PC-9 (cell line): ENCODE measurements at regions of chr5 and their contacts with region 1.

Region 1: DNA sequence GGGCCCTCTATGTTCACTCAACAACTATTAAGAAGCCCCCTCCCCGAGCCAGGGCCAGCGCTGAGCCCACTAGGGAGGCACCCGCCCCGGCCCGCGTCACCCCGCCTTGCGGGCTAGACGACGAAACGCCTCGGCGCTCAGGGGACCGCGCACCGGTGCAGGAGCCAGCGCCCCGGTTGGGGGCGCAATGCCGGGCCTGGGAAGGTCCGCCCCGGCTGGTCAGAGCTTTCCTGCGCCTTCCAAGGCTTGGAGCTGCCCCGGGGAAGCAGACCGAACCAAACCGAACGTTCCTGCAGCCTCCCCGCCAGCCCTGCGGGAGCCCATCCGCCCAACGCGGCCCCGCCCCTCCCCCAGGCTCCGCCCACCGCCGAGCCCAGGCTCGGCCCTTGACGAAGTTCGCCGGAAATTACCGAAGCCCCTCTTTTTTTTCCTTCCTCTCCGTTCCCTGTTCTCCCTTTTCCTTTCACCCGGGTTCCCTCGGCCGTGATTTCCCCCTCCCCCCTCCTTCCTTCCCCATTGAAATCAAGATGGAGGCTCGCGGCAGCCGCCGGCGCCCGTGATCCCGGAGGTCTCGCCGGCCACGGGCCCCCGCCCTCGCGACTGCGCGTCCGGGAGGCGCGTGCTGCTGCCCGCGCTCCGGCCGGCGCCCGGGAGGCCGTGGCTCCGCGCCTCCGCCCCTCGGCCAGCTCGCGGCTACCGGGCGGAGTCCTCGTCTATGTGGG is at the start of gene TRIO:
- DNase-seq: peak; percentile 80 to 100
- H3K4me3 ChIP-seq: peak within 1 kb of the TSS; percentile 99
- H3K27ac ChIP-seq: peak within 1 kb of the TSS; percentile 78
- H3K4me1 ChIP-seq: peaks cover 40% of the 10 kb centered on the region
- H3K27me3 ChIP-seq: no peaks in the 10 kb centered on the region
- CTCF ChIP-seq: peak; percentile 68
- total RNA-seq, gene TRIO: 596 and 756 TPM in 2 replicates

Region 2: GRCh38 chr5:13843175-13843846 is 299.7 kb before region 1 on chr5:
- CTCF ChIA-PET with region 1: no interaction called
- POLR2A ChIA-PET with region 1: no interaction called
- intact Hi-C with region 1: no loop called
- DNase-seq: no peak
- H3K4me3 ChIP-seq: no peak overlapping the region
- H3K27ac ChIP-seq: no peak overlapping the region
- H3K4me1 ChIP-seq: no peaks in the 10 kb centered on the region
- H3K27me3 ChIP-seq: no peaks in the 10 kb centered on the region
- CTCF ChIP-seq: no peak

Region 3: GRCh38 chr5:13930541-13931172 is 212.3 kb before region 1 on chr5:
- CTCF ChIA-PET with region 1: no interaction called
- POLR2A ChIA-PET with region 1: no interaction called
- intact Hi-C with region 1: no loop called
- DNase-seq: no peak
- H3K4me3 ChIP-seq: no peak overlapping the region
- H3K27ac ChIP-seq: no peak overlapping the region
- H3K4me1 ChIP-seq: no peaks in the 10 kb centered on the region
- H3K27me3 ChIP-seq: no peaks in the 10 kb centered on the region
- CTCF ChIP-seq: no peak

Region 4: DNA sequence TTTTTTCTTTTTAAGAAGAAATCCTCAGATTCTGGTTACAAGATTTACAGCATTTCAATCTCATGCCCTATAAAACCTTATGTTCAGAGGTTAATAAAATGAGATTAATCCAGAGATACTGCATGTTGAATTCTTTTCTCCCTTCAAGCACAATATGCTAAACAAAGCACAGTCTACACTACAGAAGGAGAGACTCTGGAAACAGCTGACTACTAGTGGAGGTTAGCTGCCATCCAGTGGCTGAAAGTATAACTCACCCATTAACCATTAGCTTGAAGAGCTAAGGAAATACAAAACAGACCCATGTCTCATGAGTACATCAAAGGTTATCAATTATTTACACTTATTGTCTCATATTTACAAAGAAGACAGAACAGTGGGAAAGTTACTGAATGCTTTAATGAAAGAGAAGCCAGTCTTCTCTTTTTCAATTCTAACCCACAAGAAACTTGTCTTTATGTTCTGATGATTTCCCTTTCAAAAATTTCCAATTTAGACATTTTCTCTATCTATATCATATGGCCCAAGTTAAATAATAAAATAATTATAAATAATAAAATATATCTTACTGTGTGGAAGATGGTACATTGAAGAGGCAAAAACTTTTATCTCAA is 185.8 kb before region 1 on chr5:
- CTCF ChIA-PET with region 1: no interaction called
- POLR2A ChIA-PET with region 1: no interaction called
- intact Hi-C with region 1: no loop called
- DNase-seq: peak in 1 of 2 experiments; percentile 51
- H3K4me3 ChIP-seq: no peak overlapping the region
- H3K27ac ChIP-seq: no peak overlapping the region
- H3K4me1 ChIP-seq: peaks cover 11% of the 10 kb centered on the region
- H3K27me3 ChIP-seq: no peaks in the 10 kb centered on the region
- CTCF ChIP-seq: peak; percentile 89

Region 5: DNA sequence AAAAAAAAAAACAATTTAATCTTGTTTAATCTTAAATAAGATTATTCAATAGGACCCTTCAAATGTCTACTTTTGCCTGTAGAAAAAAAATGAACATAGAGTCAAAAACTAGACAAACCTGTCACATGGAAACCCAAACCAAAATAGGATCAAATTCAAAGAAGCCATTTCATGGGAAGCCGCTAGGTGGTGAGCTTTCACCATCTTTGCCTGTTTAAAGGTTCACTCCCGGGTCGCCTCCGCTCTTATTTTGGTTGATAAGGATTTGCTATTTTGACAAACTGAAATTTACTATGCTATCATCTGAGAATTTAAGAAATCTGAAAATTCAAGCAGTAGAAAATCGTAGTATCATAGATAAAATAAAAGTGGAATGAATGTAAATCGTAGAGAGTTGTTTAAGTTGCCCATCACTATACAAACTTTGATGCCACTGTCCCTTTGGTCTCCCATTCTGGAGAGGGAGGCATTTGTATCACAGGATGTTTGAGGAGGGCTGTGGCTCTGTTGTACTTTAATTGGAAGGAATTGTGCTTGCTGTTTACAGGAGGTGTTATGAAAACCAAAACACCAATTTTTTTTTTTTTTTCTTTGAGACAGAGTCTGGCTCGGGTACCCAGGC is 155.0 kb before region 1 on chr5:
- CTCF ChIA-PET with region 1: interaction called, 10 read pairs
- POLR2A ChIA-PET with region 1: interaction called, 5 read pairs
- intact Hi-C with region 1: loop called (anchors 1 kb)
- DNase-seq: peak; percentile 69 to 87
- H3K4me3 ChIP-seq: no peak overlapping the region
- H3K27ac ChIP-seq: peak overlapping the region; percentile 25; the same call in 1 of the 2 replicates
- H3K4me1 ChIP-seq: peaks cover 30% of the 10 kb centered on the region
- H3K27me3 ChIP-seq: no peaks in the 10 kb centered on the region
- CTCF ChIP-seq: peak; percentile 97

Region 6: DNA sequence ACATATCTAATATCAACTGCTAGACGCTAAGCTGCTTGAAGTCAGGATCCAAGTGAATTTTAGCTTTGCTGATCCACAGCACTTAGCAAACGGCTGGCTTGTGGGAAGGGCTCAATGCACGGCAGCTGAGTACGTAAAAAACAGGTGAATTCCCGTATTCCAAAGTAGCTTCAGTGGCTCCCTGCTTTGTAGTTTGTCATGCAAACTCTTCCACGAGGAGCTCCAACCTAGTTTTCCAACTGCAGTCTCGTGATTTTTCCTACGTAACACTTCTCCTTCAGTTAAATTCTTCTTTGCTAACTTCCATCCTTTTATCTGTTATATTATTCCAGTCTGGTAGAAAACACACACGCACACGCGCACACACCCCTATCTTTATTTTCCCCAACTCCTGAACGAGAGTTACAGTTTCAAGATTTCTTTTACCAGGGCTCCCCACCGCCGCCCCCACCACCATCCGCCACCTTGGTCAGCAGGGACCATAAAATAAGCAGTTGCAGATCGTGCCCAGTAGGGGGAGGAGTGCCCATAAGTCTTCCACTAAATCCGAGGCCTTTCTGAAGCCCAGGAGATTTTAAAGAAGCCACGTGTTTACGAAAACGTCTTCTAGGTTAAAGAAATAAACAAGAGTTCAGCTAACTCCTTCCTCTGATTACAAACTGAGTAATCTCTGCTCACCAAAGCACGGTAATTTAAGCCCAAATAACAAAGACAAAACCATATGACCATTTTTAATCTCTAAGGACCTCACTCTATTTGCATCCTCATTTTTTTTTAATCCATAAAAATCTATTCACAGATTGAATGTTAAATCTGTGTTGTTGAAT is 34.6 kb before region 1 on chr5:
- CTCF ChIA-PET with region 1: interaction called, 8 read pairs
- POLR2A ChIA-PET with region 1: interaction called, 23 read pairs
- intact Hi-C with region 1: loop called (anchors 1 kb)
- DNase-seq: peak in 1 of 2 experiments; percentile 81
- H3K4me3 ChIP-seq: no peak overlapping the region
- H3K27ac ChIP-seq: peak overlapping the region; percentile 22; the same call in 1 of the 2 replicates
- H3K4me1 ChIP-seq: peaks cover 10% of the 10 kb centered on the region
- H3K27me3 ChIP-seq: no peaks in the 10 kb centered on the region
- CTCF ChIP-seq: peak; percentile 59

Region 7: GRCh38 chr5:14172149-14172795 is 29.3 kb after region 1 on chr5:
- CTCF ChIA-PET with region 1: interaction called, 10 read pairs
- POLR2A ChIA-PET with region 1: interaction called, 9 read pairs
- intact Hi-C with region 1: no loop called
- DNase-seq: no peak
- H3K4me3 ChIP-seq: no peak overlapping the region
- H3K27ac ChIP-seq: peak overlapping the region; percentile 21; the same call in 1 of the 2 replicates
- H3K4me1 ChIP-seq: peaks cover 47% of the 10 kb centered on the region
- H3K27me3 ChIP-seq: no peaks in the 10 kb centered on the region
- CTCF ChIP-seq: no peak

Region 8: GRCh38 chr5:14234219-14234618 is 91.2 kb after region 1 on chr5:
- CTCF ChIA-PET with region 1: no interaction called
- POLR2A ChIA-PET with region 1: interaction called, 3 read pairs
- intact Hi-C with region 1: loop called (anchors 1 kb)
- DNase-seq: peak; percentile 93
- H3K4me3 ChIP-seq: no peak overlapping the region
- H3K27ac ChIP-seq: peak overlapping the region; percentile 73
- H3K4me1 ChIP-seq: peaks cover 40% of the 10 kb centered on the region
- H3K27me3 ChIP-seq: no peaks in the 10 kb centered on the region
- CTCF ChIP-seq: no peak

Region 9: GRCh38 chr5:14270209-14270702 is 127.3 kb after region 1 on chr5:
- CTCF ChIA-PET with region 1: interaction called, 23 read pairs
- POLR2A ChIA-PET with region 1: interaction called, 20 read pairs
- intact Hi-C with region 1: loop called (anchors 1 kb)
- DNase-seq: peak; percentile 81 to 86
- H3K4me3 ChIP-seq: 0 out of 2 replicates have a peak overlapping the region, but pooled peaks have one; percentile 8
- H3K27ac ChIP-seq: peak overlapping the region; percentile 88
- H3K4me1 ChIP-seq: peaks cover 57% of the 10 kb centered on the region
- H3K27me3 ChIP-seq: no peaks in the 10 kb centered on the region
- CTCF ChIP-seq: peak; percentile 90